ENCODE measurements at regions of chr11 and their contacts with region 1.

Region 1: GRCh38 chr11:83292709-83293456 is 6.7 kb upstream of the CCDC90B start:
- DNase-seq: no peak
- ATAC-seq: peak; percentile 83 to 95 (median 88)
- H3K4me3 ChIP-seq: no peak overlapping the region
- H3K27ac ChIP-seq: no peak overlapping the region
- H3K4me1 ChIP-seq: peaks cover 0 to 3% (median 0%) of the 10 kb centered on the region in 4 donors
- H3K27me3 ChIP-seq: no peaks in the 10 kb centered on the region
- CTCF ChIP-seq: peak; percentile 63 to 76 (median 68)
- POLR2A ChIP-seq: no peak

Region 2: DNA sequence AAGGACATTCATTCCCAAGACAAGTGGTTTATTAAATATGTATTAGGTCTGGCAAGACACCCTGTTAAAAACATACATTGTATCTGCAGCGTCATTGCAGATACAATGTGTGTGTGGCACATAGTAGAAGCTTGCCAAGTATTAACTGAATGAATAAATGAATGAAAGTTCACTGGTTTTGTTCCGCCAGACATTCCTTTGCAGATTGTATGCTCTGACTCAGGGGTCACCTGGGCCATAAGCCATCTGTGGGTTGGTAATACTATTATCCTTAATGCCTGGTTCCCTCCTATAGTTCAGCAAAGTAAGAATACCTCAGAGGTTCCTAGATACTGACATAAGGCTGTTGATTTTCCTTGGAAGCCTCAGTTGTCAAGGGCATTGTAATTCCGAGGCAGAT is 370.6 kb after region 1 on chr11:
- intact Hi-C with region 1: no loop called
- DNase-seq: no peak
- ATAC-seq: no peak
- H3K4me3 ChIP-seq: no peak overlapping the region
- H3K27ac ChIP-seq: no peak overlapping the region
- H3K4me1 ChIP-seq: peaks cover 0 to 13% (median 0%) of the 10 kb centered on the region in 4 donors
- H3K27me3 ChIP-seq: no peaks in the 10 kb centered on the region
- CTCF ChIP-seq: no peak
- POLR2A ChIP-seq: no peak

Region 3: GRCh38 chr11:83724008-83724461 is 431.2 kb after region 1 on chr11:
- intact Hi-C with region 1: loop called in 1 of 2 experiments (anchors 10 kb)
- DNase-seq: peak in 1 of 3 donors; percentile 50
- ATAC-seq: peak; percentile 85 to 90 (median 86)
- H3K4me3 ChIP-seq: peak overlapping the region; percentile 26 to 60 (median 42)
- H3K27ac ChIP-seq: peak overlapping the region in 1 of 3 donors; percentile 66
- H3K4me1 ChIP-seq: no peaks in the 10 kb centered on the region
- H3K27me3 ChIP-seq: no peaks in the 10 kb centered on the region
- CTCF ChIP-seq: peak; percentile 50 to 62 (median 58)
- POLR2A ChIP-seq: no peak

Region 4: GRCh38 chr11:83819933-83820549 is 527.2 kb after region 1 on chr11:
- intact Hi-C with region 1: loop called in 1 of 2 experiments (anchors 5 kb)
- DNase-seq: no peak
- ATAC-seq: peak; percentile 80 to 91 (median 85)
- H3K4me3 ChIP-seq: no peak overlapping the region
- H3K27ac ChIP-seq: no peak overlapping the region
- H3K4me1 ChIP-seq: no peaks in the 10 kb centered on the region
- H3K27me3 ChIP-seq: no peaks in the 10 kb centered on the region
- CTCF ChIP-seq: peak; percentile 63 to 75 (median 68)
- POLR2A ChIP-seq: no peak